Ovary (tissue), 10 donors: ENCODE measurements at regions of chr1 and their contacts with region 1.

Region 1: DNA sequence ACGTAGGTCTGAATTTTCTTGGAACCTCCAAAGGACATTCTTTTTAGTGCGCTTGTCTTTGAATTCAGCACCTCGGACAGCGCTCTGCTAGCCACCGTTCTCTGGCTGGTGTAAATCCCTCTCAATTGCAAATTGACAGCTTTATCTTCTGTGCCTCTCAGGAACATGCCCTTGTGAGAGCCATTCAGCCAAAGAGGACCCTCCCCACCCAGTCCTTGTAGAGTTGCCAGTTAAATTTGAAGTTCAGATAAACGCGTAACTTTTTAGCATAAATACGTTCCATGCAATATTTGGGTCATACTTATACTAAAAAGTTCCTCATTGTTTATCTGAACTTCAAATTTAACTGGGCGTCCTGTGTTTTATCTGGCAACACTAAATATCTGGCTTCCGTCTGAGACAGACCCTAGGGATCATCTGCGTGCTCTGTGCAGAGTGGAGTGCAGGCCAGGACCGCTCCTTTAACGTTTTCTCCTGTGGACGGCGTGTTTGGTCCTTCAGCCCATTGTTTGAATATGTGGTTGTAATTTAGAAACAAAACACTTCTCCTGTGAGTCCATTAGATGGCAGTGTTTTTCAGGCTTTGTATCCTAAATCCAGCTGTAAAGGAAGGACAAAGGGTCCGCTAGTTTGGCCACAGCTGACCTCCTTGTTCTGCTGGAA is 7.0 kb downstream of the KCNAB2 start:
- DNase-seq: peak; percentile 47 to 79 (median 68)
- H3K4me3 ChIP-seq: no peak overlapping the region
- H3K27ac ChIP-seq: no peak overlapping the region
- H3K4me1 ChIP-seq: no peaks in the 10 kb centered on the region
- H3K27me3 ChIP-seq: no peaks in the 10 kb centered on the region
- CTCF ChIP-seq: peak in 1 of 3 donors; percentile 29
- EP300 ChIP-seq: no peak
- POLR2A ChIP-seq: no peak

Region 2: DNA sequence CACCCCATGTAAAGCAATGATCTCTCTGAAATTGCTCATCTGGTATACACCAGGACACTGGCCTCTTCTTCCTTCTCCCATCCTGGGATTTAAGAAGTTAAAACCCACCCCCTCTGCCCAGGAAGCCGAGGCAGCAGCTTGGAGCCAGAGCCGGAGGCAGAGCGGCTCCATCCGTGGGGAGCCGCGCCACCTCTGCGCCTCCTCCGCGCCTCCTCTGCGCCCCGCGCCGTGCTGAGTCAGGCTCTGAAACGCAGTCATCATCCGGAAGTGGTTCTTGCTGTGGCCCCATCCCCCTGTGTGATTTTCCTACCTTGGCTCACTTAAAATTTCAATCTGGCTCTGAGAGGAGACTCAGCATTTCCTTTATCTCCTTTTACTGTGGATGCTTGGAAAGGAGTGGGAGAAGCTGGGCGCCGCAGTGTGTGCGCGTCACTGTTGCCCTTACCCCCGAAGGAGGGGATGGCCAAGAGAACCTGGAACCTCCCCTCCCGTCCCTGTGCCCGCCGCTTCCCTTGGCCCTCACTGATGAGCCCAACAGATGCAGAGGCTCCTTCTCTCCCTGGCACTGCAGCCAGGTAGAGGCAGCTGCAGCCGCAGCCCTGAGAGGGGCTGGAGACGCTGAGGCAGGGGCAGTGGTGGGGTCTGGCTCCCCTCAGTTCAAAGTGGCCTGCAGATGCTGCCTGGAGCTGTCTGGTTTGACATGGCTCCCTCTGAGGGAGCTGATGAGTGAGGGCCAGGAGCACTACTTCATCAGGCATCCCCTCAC is 45.2 kb before region 1 on chr1:
- intact Hi-C with region 1: loop called in 1 of 4 experiments (anchors 2 kb)
- DNase-seq: no peak
- H3K4me3 ChIP-seq: no peak overlapping the region
- H3K27ac ChIP-seq: no peak overlapping the region
- H3K4me1 ChIP-seq: no peaks in the 10 kb centered on the region
- H3K27me3 ChIP-seq: no peaks in the 10 kb centered on the region
- CTCF ChIP-seq: no peak
- EP300 ChIP-seq: no peak
- POLR2A ChIP-seq: no peak

Region 3: DNA sequence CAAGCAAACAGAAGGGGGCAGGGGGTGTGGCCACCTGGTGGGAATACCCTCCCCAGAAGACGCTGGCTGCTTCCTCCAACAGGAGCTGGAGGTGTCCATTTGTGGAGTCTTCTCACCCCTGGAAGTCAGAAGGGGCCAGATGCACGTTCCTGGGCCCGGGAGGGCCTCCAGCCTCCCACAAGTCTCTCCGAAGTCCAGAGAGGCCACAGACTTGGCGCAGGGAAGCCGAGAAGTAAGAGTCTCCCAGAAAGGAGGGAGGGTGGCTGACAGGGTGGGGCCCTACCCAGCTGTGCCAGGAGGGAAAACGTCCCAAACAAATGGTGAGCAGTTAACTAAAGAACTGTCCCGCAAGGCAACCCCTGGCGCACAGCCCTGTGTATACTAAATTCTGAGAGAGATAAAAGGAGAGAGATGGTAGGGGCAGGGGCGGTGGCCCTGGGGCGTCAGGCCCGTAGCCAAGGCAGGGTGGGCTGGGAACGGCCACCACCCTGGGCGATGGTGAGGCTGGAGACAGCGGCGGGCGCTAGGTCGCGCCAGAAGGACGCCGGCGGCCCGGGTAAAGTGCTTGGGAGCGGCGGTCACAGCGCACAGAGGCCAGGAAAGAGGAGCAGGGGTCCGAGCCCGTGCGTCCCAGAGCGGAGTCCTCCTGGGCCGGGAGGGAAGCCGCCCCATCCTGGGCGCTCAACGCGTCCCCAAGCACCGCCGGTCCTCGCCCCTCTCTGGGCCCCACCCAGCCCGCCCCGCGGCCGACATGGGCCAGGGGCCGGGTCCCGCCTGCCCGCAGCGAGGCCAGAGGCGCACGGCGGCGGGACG is 126.3 kb after region 1 on chr1:
- intact Hi-C with region 1: loop called in 1 of 4 experiments (anchors 5 kb)
- DNase-seq: no peak
- H3K4me3 ChIP-seq: no peak overlapping the region
- H3K27ac ChIP-seq: no peak overlapping the region
- H3K4me1 ChIP-seq: peaks cover 2% of the 10 kb centered on the region
- H3K27me3 ChIP-seq: no peaks in the 10 kb centered on the region
- CTCF ChIP-seq: no peak
- EP300 ChIP-seq: no peak
- POLR2A ChIP-seq: no peak

Region 4: DNA sequence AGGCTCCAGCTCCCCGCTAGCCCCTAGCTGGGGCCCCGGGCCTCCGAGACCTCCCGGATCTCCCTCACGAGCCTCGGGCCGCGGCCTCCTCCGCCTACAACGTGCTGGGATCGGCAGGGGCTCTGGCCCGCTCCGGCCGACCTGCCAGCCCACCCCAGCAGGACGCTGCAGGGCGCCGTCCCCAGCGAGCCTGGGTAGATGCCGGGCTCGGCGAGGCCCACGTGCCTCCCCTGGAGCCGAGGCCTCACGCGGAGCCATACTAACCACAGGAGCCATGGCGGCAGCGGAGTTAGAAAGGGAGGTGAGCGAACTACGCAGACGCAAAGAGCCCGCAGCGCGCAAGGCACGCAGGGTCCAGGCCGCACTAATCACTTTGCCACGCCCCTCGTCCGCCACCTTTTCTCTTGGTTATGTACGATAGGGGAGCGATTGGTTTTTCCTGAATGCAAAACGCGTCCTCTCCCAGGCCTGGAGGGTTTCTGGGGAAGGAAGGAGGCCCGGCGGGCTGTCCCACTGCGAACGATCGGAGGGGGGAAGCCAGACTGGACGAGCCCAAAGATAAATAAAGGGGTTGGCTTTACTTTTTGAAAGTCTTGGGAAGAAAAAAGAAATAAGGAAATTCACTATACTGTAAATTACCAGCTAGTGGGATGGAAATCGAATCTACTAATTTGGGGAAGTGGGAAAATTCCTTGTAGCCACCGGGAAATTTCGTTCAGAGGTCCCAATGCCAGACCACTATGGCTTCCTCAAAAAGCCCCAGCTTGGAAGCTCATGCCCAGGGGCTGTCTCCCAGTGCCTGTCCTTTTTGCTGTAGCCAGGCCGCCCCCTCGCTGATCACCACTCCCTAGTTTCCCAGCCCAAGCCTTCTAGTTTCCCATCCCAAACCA is 146.9 kb after region 1 on chr1 and contains the start of gene RPL22:
- intact Hi-C with region 1: loop called in 1 of 4 experiments (anchors 10 kb)
- DNase-seq: peak; percentile 95 to 98 (median 96)
- H3K4me3 ChIP-seq: peak within 1 kb of the TSS; percentile 71
- H3K27ac ChIP-seq: peak within 1 kb of the TSS; percentile 17 to 58
- H3K4me1 ChIP-seq: peaks cover 13% of the 10 kb centered on the region
- H3K27me3 ChIP-seq: no peaks in the 10 kb centered on the region
- CTCF ChIP-seq: peak in 1 of 3 donors; percentile 32
- EP300 ChIP-seq: no peak
- POLR2A ChIP-seq: no peak
- total RNA-seq, gene RPL22: 379 to 1,097 (median 715) TPM

Region 5: DNA sequence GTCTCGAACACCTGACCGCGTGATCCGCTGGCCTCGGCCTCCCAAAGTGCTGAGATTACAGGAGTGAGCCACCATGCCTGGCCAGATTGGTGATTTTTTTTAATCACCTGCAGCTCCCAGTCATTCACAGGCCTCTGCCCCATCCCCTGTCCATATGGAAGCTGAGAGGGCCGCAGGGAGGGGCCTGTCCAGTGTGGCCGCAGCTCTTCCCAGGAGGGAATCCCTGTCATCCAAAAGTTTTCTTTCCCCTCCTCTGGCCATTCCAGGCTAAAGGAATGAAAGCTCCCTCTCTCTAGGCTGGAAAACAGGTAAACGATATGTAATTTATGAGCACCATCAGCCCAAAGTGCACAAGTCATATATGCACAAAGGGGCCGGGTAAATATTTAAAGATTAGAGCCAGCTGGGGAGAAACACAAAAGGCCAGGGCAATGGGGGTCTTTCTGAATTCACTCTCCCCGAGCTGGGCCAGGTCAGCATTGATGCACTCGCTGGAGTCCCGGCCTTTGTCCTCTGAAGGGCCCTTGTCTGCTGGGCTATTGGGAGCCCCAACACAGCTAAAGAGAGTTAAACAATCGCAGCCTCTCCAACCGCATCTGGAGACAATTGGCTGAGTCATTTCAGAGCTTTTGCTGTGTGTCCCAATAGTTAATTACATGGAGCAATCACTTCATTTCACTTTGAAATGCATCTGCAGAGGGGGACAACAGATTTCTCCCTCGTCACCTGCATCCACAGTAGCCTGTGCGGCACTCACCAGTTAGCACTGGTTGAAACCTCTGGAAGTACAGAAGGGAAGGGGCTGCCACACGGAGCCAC is 187.5 kb after region 1 on chr1:
- intact Hi-C with region 1: loop called in 3 of 4 experiments (anchors 5 to 10 kb)
- DNase-seq: no peak
- H3K4me3 ChIP-seq: no peak overlapping the region
- H3K27ac ChIP-seq: no peak overlapping the region
- H3K4me1 ChIP-seq: peaks cover 4% of the 10 kb centered on the region
- H3K27me3 ChIP-seq: peaks cover 9% of the 10 kb centered on the region
- CTCF ChIP-seq: no peak
- EP300 ChIP-seq: no peak
- POLR2A ChIP-seq: no peak

Region 6: DNA sequence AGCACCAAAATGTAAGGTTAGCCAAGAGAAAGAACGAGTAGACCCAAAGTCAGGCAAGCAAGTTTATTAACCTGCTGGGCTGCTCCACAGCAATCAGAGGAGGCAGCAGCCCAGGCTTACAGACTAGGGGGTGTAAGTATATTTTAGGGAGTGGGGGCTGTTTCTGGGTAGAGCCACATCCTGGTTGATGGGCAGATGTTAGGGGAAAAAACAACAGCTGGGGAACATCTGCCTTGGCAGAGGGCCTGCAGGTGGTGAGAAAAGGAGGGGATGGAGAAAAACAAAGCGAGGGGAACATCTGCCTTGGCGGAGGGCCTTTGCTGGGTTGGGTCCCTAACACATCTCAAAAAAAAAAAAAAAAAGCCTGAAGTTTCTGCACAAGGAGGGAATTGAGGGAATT is 517.4 kb after region 1 on chr1:
- intact Hi-C with region 1: no loop called
- DNase-seq: no peak
- H3K4me3 ChIP-seq: no peak overlapping the region
- H3K27ac ChIP-seq: no peak overlapping the region
- H3K4me1 ChIP-seq: no peaks in the 10 kb centered on the region
- H3K27me3 ChIP-seq: no peaks in the 10 kb centered on the region
- CTCF ChIP-seq: no peak
- EP300 ChIP-seq: no peak
- POLR2A ChIP-seq: no peak